Caco-2 (cell line): ENCODE measurements at regions of chr9 and their contacts with region 1.

Region 1: GRCh38 chr9:123296174-123296573 is 27.8 kb upstream of the STRBP start:
- DNase-seq: no peak
- H3K4me3 ChIP-seq: no peak overlapping the region
- H3K4me3 Mint-ChIP-seq: no peak overlapping the region
- H3K27ac Mint-ChIP-seq: no peak overlapping the region
- H3K4me1 ChIP-seq: no peaks in the 10 kb centered on the region
- H3K4me1 Mint-ChIP-seq: no peaks in the 10 kb centered on the region
- H3K27me3 ChIP-seq: no peaks in the 10 kb centered on the region
- H3K27me3 Mint-ChIP-seq: no peaks in the 10 kb centered on the region
- CTCF ChIP-seq: no peak

Region 2: GRCh38 chr9:123262338-123262737 is 33.8 kb before region 1 on chr9:
- CTCF ChIA-PET with region 1: interaction called, 5 read pairs
- POLR2A ChIA-PET with region 1: no interaction called
- intact Hi-C with region 1: loop called (anchors 2 kb)
- DNase-seq: no peak
- H3K4me3 ChIP-seq: no peak overlapping the region
- H3K4me3 Mint-ChIP-seq: no peak overlapping the region
- H3K27ac Mint-ChIP-seq: no peak overlapping the region
- H3K4me1 ChIP-seq: peaks cover 7% of the 10 kb centered on the region
- H3K4me1 Mint-ChIP-seq: peaks cover 28% of the 10 kb centered on the region
- H3K27me3 ChIP-seq: no peaks in the 10 kb centered on the region
- H3K27me3 Mint-ChIP-seq: no peaks in the 10 kb centered on the region
- CTCF ChIP-seq: no peak

Region 3: DNA sequence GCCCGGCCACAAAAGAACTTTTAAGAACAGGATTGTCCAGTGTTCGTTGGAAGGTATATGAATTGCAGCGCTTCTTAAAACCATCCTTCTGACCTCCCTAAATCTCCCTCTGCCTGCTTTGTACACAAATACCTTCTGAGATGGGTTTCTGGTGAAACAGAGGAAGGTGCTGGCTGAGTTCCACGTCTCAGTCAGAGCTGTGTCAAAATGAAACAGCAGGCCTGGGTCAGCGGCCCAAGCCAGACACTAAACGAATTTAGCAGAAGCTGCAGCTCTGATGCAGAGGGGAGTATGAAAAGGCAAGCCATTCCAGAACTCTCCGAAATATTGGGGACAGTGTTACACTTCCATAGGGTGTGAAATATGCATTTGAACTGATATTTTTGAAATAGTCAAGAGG is 22.0 kb after region 1 on chr9:
- CTCF ChIA-PET with region 1: no interaction called
- POLR2A ChIA-PET with region 1: no interaction called
- intact Hi-C with region 1: no loop called
- DNase-seq: no peak
- H3K4me3 ChIP-seq: no peak overlapping the region
- H3K4me3 Mint-ChIP-seq: no peak overlapping the region
- H3K27ac Mint-ChIP-seq: no peak overlapping the region
- H3K4me1 ChIP-seq: peaks cover 7% of the 10 kb centered on the region
- H3K4me1 Mint-ChIP-seq: peaks cover 9% of the 10 kb centered on the region
- H3K27me3 ChIP-seq: no peaks in the 10 kb centered on the region
- H3K27me3 Mint-ChIP-seq: no peaks in the 10 kb centered on the region
- CTCF ChIP-seq: no peak